Heart right ventricle (tissue), 16 donors: ENCODE measurements at regions of chr9 and their contacts with region 1.

Region 1: DNA sequence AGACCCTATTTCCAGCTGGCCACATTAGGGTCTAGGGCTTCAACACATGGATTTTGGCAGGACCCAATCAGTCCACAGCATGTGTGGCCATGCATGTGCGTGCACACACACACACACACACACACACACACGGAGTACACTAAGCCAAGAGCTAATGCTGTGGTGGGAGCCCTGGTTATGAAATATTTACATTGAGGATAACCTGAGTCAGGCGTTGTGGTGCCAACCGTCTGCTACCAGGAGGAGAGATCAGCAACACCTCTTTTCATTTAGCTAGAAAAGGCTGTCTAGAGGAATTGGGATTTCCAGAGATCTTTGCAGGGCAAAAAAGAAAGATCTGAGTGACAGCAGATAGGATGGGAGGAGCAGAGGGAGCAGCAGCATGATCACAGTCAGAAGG is 141.5 kb downstream of the TRPM3 start:
- DNase-seq: no peak
- ATAC-seq: no peak
- H3K4me3 ChIP-seq: no peak overlapping the region
- H3K27ac ChIP-seq: no peak overlapping the region
- H3K4me1 ChIP-seq: no peaks in the 10 kb centered on the region
- H3K27me3 ChIP-seq: no peaks in the 10 kb centered on the region
- CTCF ChIP-seq: no peak

Region 2: DNA sequence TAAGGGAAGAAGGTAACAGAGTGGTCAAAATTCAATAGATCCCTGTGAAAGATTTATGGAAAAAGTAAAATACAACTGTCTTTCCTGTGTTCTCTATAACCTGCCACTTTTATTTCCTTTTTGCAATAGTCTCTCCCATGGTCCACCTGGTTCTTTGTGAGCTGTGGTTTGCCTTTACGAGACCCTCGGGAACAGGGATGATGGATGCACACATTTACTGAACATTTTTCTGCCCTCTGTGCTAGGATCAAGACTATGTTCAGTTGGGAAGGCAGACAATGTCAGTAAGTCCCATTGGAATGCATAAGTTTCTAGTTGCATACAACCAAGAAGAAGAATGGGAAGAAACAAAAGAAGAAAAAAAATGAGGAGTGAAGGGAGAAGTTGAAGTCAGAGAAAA is 139.7 kb before region 1 on chr9:
- intact Hi-C with region 1: loop called in 1 of 10 experiments (anchors 10 kb)
- DNase-seq: no peak
- ATAC-seq: no peak
- H3K4me3 ChIP-seq: no peak overlapping the region
- H3K27ac ChIP-seq: no peak overlapping the region
- H3K4me1 ChIP-seq: no peaks in the 10 kb centered on the region
- H3K27me3 ChIP-seq: no peaks in the 10 kb centered on the region
- CTCF ChIP-seq: no peak

Region 3: DNA sequence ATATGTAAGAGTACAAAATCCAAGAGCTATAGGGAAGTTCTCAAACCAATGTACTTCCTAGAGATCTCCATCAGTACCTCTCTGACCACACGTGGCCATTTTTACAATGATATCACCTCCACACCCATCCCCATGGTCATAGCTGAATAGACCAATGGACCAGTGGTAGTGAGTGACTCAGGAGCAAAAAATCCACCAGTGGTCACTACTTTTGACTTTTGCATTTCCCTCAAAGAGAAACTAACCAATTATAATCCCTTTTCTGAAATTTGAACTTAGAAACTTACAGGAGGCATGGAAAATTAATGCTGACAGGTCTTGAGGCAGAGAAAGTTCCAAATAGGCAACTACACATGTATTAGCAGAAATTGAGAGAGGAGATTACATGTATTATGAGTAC is 96.9 kb before region 1 on chr9:
- intact Hi-C with region 1: no loop called
- DNase-seq: no peak
- ATAC-seq: no peak
- H3K4me3 ChIP-seq: no peak overlapping the region
- H3K27ac ChIP-seq: no peak overlapping the region
- H3K4me1 ChIP-seq: peaks cover 0 to 7% (median 0%) of the 10 kb centered on the region in 9 donors
- H3K27me3 ChIP-seq: no peaks in the 10 kb centered on the region
- CTCF ChIP-seq: no peak

Region 4: GRCh38 chr9:70962664-70963435 is 17.1 kb before region 1 on chr9:
- intact Hi-C with region 1: no loop called
- DNase-seq: no peak
- ATAC-seq: no peak
- H3K4me3 ChIP-seq: no peak overlapping the region
- H3K27ac ChIP-seq: no peak overlapping the region
- H3K4me1 ChIP-seq: peaks cover 0 to 9% (median 0%) of the 10 kb centered on the region in 9 donors
- H3K27me3 ChIP-seq: no peaks in the 10 kb centered on the region
- CTCF ChIP-seq: no peak